Naive thymus-derived CD4-positive, alpha-beta T cell (primary cell): ENCODE measurements at regions of chr7 and their contacts with region 1.

Region 1: GRCh38 chr7:116786791-116787443 is 75.5 kb upstream of the CAPZA2 start:
- DNase-seq: no peak
- ATAC-seq: peak; percentile 85
- H3K4me3 ChIP-seq: no peak overlapping the region
- H3K4me3 Mint-ChIP-seq: no peak overlapping the region
- H3K27ac ChIP-seq: no peak overlapping the region
- H3K27ac Mint-ChIP-seq: no peak overlapping the region
- H3K4me1 ChIP-seq: no peaks in the 10 kb centered on the region
- H3K4me1 Mint-ChIP-seq: no peaks in the 10 kb centered on the region
- H3K27me3 ChIP-seq: no peaks in the 10 kb centered on the region
- H3K27me3 Mint-ChIP-seq: peaks cover 0 to 4% (median 0%) of the 10 kb centered on the region in 5 donors

Region 2: GRCh38 chr7:115879171-115879570 is 907.7 kb before region 1 on chr7:
- CTCF ChIA-PET with region 1: no interaction called
- POLR2A ChIA-PET with region 1: no interaction called
- intact Hi-C with region 1: no loop called
- DNase-seq: no peak
- ATAC-seq: no peak
- H3K4me3 ChIP-seq: no peak overlapping the region
- H3K4me3 Mint-ChIP-seq: no peak overlapping the region
- H3K27ac ChIP-seq: no peak overlapping the region
- H3K27ac Mint-ChIP-seq: no peak overlapping the region
- H3K4me1 ChIP-seq: no peaks in the 10 kb centered on the region
- H3K4me1 Mint-ChIP-seq: no peaks in the 10 kb centered on the region
- H3K27me3 ChIP-seq: no peaks in the 10 kb centered on the region
- H3K27me3 Mint-ChIP-seq: peaks cover 0 to 4% (median 0%) of the 10 kb centered on the region in 5 donors

Region 3: GRCh38 chr7:116671681-116672595 is 115.0 kb before region 1 on chr7 and contains the start of gene MET:
- CTCF ChIA-PET with region 1: no interaction called
- POLR2A ChIA-PET with region 1: no interaction called
- intact Hi-C with region 1: loop called in 1 of 2 experiments (anchors 5 kb)
- DNase-seq: peak in 2 of 9 donors; percentile 11 to 57
- ATAC-seq: peak; percentile 84
- H3K4me3 ChIP-seq: no peak within 1 kb of the TSS
- H3K4me3 Mint-ChIP-seq: peak within 1 kb of the TSS in 9 of 10 donors; percentile 8 to 80 (median 45)
- H3K27ac ChIP-seq: no peak within 1 kb of the TSS
- H3K27ac Mint-ChIP-seq: no peak within 1 kb of the TSS
- H3K4me1 ChIP-seq: no peaks in the 10 kb centered on the region
- H3K4me1 Mint-ChIP-seq: peaks cover 0 to 12% (median 4%) of the 10 kb centered on the region in 7 donors
- H3K27me3 ChIP-seq: no peaks in the 10 kb centered on the region
- H3K27me3 Mint-ChIP-seq: peaks cover 48 to 78% (median 63%) of the 10 kb centered on the region in 5 donors
- total RNA-seq, gene MET: 0.19 to 1.0 (median 0.73) TPM in 3 of 5 experiments, not detected in the others